HepG2 (cell line): ENCODE measurements at regions of chr10 and their contacts with region 1.

Region 1: GRCh38 chr10:122703439-122704118 is 3.9 kb upstream of the C10orf120 start:
- DNase-seq: peak; percentile 41
- ATAC-seq: peak; percentile 98
- H3K4me3 ChIP-seq: no peak overlapping the region
- H3K27ac ChIP-seq: no peak overlapping the region
- H3K4me1 ChIP-seq: no peaks in the 10 kb centered on the region
- H3K27me3 ChIP-seq: peaks cover 2 to 10% of the 10 kb centered on the region in 2 experiments; a peak in 4 of 5 replicates
- CTCF ChIP-seq: peak; percentile 89
- EP300 ChIP-seq: no peak
- POLR2A ChIP-seq: no peak
- RAD21 ChIP-seq: peak; percentile 84

Region 2: GRCh38 chr10:122010405-122011050 is 693.1 kb before region 1 on chr10:
- CTCF ChIA-PET with region 1: no interaction called
- POLR2A ChIA-PET with region 1: no interaction called
- in situ Hi-C with region 1: no loop called
- intact Hi-C with region 1: no loop called
- DNase-seq: no peak
- ATAC-seq: no peak
- H3K4me3 ChIP-seq: no peak overlapping the region
- H3K27ac ChIP-seq: no peak overlapping the region
- H3K4me1 ChIP-seq: peaks cover 44% of the 10 kb centered on the region
- H3K27me3 ChIP-seq: no peaks in the 10 kb centered on the region
- CTCF ChIP-seq: no peak
- EP300 ChIP-seq: no peak
- POLR2A ChIP-seq: no peak
- RAD21 ChIP-seq: no peak

Region 3: DNA sequence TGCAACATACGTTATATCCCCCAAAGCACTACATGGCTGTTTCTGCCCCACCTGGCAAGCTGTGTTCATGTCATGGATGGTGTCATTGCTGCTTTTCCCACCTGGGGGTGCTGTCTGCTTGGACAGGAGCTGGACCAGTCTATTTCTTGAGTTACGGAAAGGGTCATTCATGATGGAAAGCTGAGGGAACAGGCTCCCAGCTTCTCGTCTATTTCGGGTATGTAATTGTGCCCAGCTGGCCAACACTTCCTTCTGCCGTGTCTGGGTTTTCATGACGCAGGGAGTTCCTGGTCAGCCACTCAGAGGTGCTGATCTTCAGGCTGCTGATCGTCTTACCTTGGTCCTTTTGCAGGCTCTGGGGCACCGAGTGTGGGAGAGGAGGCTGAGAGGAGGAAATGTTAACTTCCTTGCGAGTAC is 423.8 kb before region 1 on chr10:
- CTCF ChIA-PET with region 1: interaction called, 13 read pairs
- POLR2A ChIA-PET with region 1: no interaction called
- in situ Hi-C with region 1: no loop called
- intact Hi-C with region 1: loop called (anchors 5 kb)
- DNase-seq: peak; percentile 54
- ATAC-seq: peak; percentile 87
- H3K4me3 ChIP-seq: peak overlapping the region in 1 of 3 experiments; percentile 14; a peak in 1 of 6 replicates
- H3K27ac ChIP-seq: no peak overlapping the region
- H3K4me1 ChIP-seq: peaks cover 32% of the 10 kb centered on the region
- H3K27me3 ChIP-seq: peaks cover 5 to 18% of the 10 kb centered on the region in 2 experiments; a peak in 4 of 5 replicates
- CTCF ChIP-seq: peak; percentile 94
- EP300 ChIP-seq: no peak
- POLR2A ChIP-seq: no peak
- RAD21 ChIP-seq: peak; percentile 85

Region 4: GRCh38 chr10:122525788-122526187 is 177.8 kb before region 1 on chr10:
- CTCF ChIA-PET with region 1: interaction called, 5 read pairs
- POLR2A ChIA-PET with region 1: no interaction called
- in situ Hi-C with region 1: no loop called
- intact Hi-C with region 1: loop called (anchors 2 kb)
- DNase-seq: peak; percentile 30
- ATAC-seq: peak; percentile 75
- H3K4me3 ChIP-seq: no peak overlapping the region
- H3K27ac ChIP-seq: no peak overlapping the region
- H3K4me1 ChIP-seq: peaks cover 18% of the 10 kb centered on the region
- H3K27me3 ChIP-seq: peaks cover 0 to 26% of the 10 kb centered on the region in 2 experiments; a peak in 1 of 5 replicates
- CTCF ChIP-seq: peak; percentile 52
- EP300 ChIP-seq: no peak
- POLR2A ChIP-seq: no peak
- RAD21 ChIP-seq: peak; percentile 41; the same call in 1 of the 2 replicates

Region 5: DNA sequence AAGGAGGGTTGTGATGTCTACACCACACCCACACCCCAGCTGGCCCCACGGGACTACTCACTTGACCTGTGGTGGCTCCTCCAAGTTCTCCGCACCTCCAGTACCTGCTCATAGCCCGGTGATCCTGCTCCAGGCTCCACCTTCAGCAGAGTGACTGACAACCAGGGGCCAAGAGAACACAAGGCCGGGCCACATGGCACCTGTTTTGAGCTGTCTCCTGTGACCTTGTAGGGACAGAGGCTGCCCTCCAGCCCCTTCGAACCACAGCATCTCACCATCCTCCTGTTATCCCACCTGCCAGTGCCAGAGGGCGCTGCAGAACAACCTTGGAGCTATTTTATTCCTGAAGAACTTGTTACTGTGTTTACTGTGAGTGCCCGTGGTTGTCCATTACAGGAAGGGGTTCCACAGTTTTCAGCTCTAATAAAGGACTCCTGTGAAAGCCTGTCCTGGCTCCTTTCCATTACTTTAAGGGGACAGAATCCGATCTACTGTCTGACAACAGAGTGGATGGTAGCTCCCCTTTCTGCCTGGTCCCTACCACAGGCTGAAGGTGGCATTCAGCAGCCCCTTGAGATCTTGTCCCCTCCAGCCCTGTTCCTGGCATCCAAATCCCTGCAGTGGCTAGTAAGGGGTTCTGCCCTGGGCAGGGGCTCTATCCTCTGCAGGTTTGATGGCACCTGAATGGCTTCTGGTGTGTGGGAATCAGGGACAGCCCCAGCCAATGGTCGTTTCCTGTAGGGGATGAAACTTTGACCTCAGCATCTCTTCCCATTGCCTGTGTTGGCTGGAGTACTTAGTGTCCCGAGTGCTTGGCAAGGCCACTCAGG is 54.8 kb before region 1 on chr10:
- CTCF ChIA-PET with region 1: interaction called, 20 read pairs
- POLR2A ChIA-PET with region 1: no interaction called
- in situ Hi-C with region 1: loop called (anchors 5 kb)
- intact Hi-C with region 1: loop called (anchors 1 kb)
- DNase-seq: peak; percentile 49
- ATAC-seq: peak; percentile 82
- H3K4me3 ChIP-seq: no peak overlapping the region
- H3K27ac ChIP-seq: no peak overlapping the region
- H3K4me1 ChIP-seq: no peaks in the 10 kb centered on the region
- H3K27me3 ChIP-seq: peaks cover 4 to 10% of the 10 kb centered on the region in 2 experiments; a peak in 3 of 5 replicates
- CTCF ChIP-seq: peak; percentile 77
- EP300 ChIP-seq: no peak
- POLR2A ChIP-seq: no peak
- RAD21 ChIP-seq: no peak